Gastrocnemius medialis (tissue), 4 donors: ENCODE measurements at regions of chr1 and their contacts with region 1.

Region 1: DNA sequence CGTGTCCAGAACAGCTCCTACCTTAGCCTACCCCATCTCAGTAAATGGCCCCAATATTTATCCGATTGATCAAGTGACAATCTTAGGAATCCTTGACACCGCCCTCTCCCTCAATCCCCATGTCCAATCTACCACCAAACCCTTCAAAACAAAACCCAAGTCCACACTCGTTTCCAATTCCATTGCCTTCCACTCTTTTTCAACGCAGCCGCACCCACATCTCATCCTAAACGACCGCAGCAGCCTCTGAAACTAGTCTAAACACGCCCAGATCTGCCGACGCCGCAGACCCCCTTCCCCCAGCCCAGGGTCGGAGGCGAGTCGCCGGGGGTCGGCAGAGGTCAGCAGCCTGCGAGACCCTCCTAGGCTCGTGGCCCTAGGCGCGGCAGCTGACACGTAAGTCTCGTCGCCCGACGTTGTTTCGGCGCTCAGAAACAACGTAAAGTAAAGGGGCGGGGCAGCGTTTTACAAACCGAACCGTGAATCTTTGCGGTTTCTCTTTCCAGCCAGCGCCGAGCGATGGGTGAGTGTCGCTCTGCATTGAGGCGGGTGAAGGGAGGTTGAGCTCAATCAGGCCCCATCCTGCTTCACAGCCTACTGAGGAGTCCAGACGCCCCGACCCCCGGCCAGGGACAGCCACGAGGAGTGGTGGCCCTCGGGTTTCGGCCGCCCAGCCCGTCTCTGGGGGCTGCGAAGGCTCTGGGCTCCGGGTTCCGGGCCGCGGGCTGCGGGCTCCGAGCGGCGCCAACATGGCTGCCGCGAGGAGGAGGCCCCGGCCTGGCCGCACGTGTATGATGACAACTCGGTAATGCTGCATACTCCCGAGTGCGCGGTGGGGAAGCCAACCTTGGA is at the start of gene RPS8:
- DNase-seq: peak; percentile 91 to 93
- ATAC-seq: peak; percentile 94 to 96
- H3K4me3 ChIP-seq: peak within 1 kb of the TSS; percentile 74 to 99 (median 85)
- H3K27ac ChIP-seq: peak within 1 kb of the TSS; percentile 91 to 100 (median 97)
- H3K4me1 ChIP-seq: peaks cover 9 to 12% of the 10 kb centered on the region in 2 donors
- H3K27me3 ChIP-seq: no peaks in the 10 kb centered on the region
- CTCF ChIP-seq: peak in 2 of 5 experiments; percentile 5 to 36
- POLR2A ChIP-seq: peak; percentile 95 to 97
- total RNA-seq, gene RPS8: 1,137 to 2,085 (median 1,818) TPM

Region 2: DNA sequence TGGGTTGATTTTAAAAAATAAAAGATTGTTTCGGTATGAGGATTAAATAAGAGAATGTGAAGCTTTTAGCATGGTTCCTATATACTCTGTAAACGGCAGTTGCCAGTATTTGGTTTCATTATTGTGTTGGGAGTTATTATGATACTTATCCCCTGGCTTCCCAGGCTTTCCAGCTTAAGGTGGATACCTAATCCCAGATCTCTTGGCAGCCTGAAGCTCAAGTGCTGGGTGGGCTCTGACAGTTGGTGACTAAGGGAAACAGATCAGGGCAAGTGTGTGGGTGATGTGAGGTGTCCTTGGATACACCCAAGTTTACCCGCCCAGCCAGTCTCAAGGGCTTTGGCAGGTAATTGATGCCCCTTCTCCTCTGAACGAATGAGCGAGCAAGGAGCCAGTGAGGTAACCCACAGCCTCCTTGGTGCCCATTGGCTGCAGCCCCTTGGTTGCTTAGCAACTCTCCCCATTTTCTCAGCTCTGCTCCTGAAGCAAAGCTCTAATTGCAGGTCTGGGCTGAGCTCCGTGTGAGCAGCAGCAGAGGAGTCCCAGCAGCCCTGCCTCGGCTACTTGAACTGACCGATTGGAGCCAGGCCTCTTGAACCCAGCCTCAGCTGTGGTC is 822.5 kb before region 1 on chr1:
- in situ Hi-C with region 1: no loop called
- intact Hi-C with region 1: loop called (anchors 5 kb)
- DNase-seq: no peak
- ATAC-seq: no peak
- H3K4me3 ChIP-seq: no peak overlapping the region
- H3K27ac ChIP-seq: peak overlapping the region; percentile 56 to 97 (median 94)
- H3K4me1 ChIP-seq: peaks cover 77% of the 10 kb centered on the region in 2 donors
- H3K27me3 ChIP-seq: no peaks in the 10 kb centered on the region
- CTCF ChIP-seq: no peak
- POLR2A ChIP-seq: no peak

Region 3: DNA sequence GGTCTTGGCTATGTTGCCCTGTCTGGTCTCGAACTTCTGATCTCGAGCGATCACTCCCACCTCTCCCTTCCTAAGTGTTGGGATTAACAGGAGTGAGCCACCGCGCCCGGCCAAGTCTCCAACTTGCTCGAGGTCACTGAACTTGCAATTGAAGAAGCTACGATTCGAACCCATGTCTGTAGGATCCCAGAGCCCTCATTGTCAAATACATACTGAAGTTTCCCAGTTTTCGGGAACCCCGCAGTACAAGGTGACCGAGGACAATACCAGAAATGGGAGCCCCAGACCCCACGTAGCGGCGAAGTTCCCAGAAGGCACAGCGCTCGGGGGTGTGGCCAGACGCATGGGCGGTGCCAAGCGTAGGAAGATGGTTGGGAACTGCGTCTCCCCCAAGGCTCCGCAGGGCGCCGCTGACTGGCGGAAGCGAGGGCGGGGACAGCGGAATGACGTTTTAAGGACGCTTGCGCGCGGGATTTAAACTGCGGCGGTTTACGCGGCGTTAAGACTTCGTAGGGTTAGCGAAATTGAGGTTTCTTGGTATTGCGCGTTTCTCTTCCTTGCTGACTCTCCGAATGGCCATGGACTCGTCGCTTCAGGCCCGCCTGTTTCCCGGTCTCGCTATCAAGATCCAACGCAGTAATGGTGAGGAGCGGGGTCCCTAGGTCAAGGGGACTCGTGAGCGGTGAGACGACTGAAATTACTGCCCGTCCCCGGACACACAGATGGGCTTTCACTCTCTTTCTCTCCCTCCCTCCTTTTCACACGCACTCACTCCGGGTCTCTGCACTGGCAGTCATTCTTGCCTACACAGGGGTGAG is 35.7 kb before region 1 on chr1 and contains the start of gene KIF2C:
- in situ Hi-C with region 1: no loop called
- intact Hi-C with region 1: loop called (anchors 2 kb)
- DNase-seq: peak; percentile 93 to 96
- ATAC-seq: peak; percentile 98
- H3K4me3 ChIP-seq: peak within 1 kb of the TSS; percentile 64 to 81 (median 74)
- H3K27ac ChIP-seq: peak within 1 kb of the TSS; percentile 87 to 94 (median 90)
- H3K4me1 ChIP-seq: peaks cover 7 to 10% of the 10 kb centered on the region in 2 donors
- H3K27me3 ChIP-seq: no peaks in the 10 kb centered on the region
- CTCF ChIP-seq: peak in 1 of 5 experiments; percentile 17
- POLR2A ChIP-seq: peak; percentile 67 to 72
- total RNA-seq, gene KIF2C: 0.46 to 0.55 TPM in 2 of 4 donors, not detected in the others